A549 (cell line): ENCODE measurements at regions of chr17 and their contacts with region 1.

Region 1: GRCh38 chr17:49249292-49249794 is 18.8 kb upstream of the PHOSPHO1 start:
- DNase-seq: no peak
- ATAC-seq: peak; percentile 20 to 47; a peak in 5 of 6 replicates
- H3K4me3 ChIP-seq: no peak overlapping the region
- H3K27ac ChIP-seq: peak overlapping the region; percentile 14 to 26; a peak in 2 of 6 replicates
- H3K4me1 ChIP-seq: peaks cover 20% of the 10 kb centered on the region
- CTCF ChIP-seq: no peak
- EP300 ChIP-seq: no peak
- POLR2A ChIP-seq: no peak
- RAD21 ChIP-seq: no peak

Region 2: DNA sequence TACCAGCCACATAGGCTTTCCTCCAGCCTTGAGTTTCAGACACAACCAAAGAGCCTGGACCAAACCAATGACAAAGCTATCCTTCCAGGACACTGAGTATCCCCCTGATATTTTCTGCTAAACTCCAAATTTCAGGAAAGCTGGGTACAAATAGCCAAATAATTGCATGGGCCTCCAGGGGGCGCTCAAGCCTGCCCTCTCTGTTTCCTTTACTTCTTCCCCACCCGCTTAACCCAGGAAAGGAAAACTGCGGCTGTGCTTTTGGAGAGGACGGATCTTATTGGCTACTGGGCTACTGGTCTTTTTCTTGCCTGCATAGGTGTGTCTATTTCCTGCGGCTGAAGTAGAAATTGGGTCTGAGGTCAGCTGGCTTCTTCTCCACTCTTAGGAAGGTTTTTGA is 69.0 kb before region 1 on chr17:
- CTCF ChIA-PET with region 1: no interaction called
- POLR2A ChIA-PET with region 1: no interaction called
- DNase-seq: peak; percentile 69 to 79
- ATAC-seq: peak; percentile 62 to 87
- H3K4me3 ChIP-seq: no peak overlapping the region
- H3K27ac ChIP-seq: no peak overlapping the region
- H3K4me1 ChIP-seq: no peaks in the 10 kb centered on the region
- CTCF ChIP-seq: peak; percentile 85
- EP300 ChIP-seq: no peak
- POLR2A ChIP-seq: no peak
- RAD21 ChIP-seq: peak; percentile 72 to 75

Region 3: DNA sequence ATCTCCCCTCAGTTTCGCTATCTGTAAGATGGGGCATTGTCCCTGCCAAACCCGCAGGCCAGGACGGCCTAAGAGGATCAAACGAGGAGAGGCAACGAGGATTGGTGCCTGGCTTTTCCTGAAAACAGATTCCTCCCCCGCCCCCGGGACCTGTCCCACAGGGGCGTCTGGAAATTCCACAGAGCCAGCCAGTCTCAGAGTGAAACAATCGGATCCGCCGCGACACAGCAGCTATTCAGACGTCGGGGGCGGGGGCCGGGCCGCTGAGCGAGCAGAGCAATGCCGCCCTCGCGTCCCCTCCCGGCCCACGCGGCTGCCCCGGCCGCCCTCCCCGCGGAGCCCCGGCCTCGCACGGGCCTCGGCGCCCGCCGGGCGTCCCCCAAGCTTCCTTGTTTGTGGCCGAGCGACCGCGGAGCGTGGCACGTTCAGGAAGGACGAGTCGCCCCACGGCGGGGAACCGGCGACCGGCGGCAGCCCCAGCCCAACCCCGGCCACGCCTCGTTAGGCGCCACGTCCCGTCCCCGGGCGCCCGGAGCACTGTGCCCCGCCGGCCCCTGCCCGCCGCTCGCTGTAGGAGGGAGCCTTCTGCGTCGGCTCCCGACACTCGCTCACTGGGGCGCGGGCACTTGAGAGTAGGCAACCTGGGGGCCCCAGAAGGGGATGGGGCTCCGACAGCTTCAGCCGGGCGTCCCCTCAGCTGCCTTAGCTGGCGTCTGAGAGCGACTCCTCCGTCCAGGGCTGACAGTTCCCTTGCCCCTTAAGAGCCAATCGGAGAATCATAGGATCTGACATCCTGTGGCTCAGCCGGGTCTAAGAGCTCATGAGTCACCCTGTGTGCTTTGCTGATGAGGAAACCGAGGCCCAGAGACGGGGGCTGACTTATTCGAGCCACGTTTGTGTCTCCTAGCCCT is 10.9 kb after region 1 on chr17:
- CTCF ChIA-PET with region 1: interaction called, 10 read pairs
- POLR2A ChIA-PET with region 1: interaction called, 4 read pairs
- DNase-seq: peak; percentile 83 to 85
- ATAC-seq: peak; percentile 91 to 92
- H3K4me3 ChIP-seq: peak overlapping the region; percentile 61
- H3K27ac ChIP-seq: peak overlapping the region; percentile 81 to 88
- H3K4me1 ChIP-seq: peaks cover 9% of the 10 kb centered on the region; the same call in 2 of the 3 replicates
- CTCF ChIP-seq: no peak
- EP300 ChIP-seq: no peak
- POLR2A ChIP-seq: peak; percentile 29; the same call in 1 of the 2 replicates
- RAD21 ChIP-seq: no peak